ENCODE measurements at regions of chr5 and their contacts with region 1.

Region 1: GRCh38 chr5:36934740-36935356 is 58.3 kb downstream of the NIPBL start:
- DNase-seq: peak in 1 of 3 donors; percentile 11
- H3K4me3 ChIP-seq: no peak overlapping the region
- H3K4me3 Mint-ChIP-seq: no peak overlapping the region
- H3K27ac ChIP-seq: no peak overlapping the region
- H3K27ac Mint-ChIP-seq: no peak overlapping the region
- H3K4me1 ChIP-seq: peaks cover 0 to 10% of the 10 kb centered on the region in 2 donors
- H3K4me1 Mint-ChIP-seq: peaks cover 45% of the 10 kb centered on the region
- H3K27me3 ChIP-seq: no peaks in the 10 kb centered on the region
- H3K27me3 Mint-ChIP-seq: no peaks in the 10 kb centered on the region
- CTCF ChIP-seq: no peak

Region 2: GRCh38 chr5:36882250-36882649 is 52.6 kb before region 1 on chr5:
- intact Hi-C with region 1: loop called (anchors 5 to 10 kb)
- DNase-seq: peak in 1 of 3 donors; percentile 21
- H3K4me3 ChIP-seq: no peak overlapping the region
- H3K4me3 Mint-ChIP-seq: no peak overlapping the region
- H3K27ac ChIP-seq: peak overlapping the region in 1 of 2 donors; percentile 1
- H3K27ac Mint-ChIP-seq: peak overlapping the region in 1 of 7 donors; percentile 81
- H3K4me1 ChIP-seq: peaks cover 19 to 63% of the 10 kb centered on the region in 2 donors
- H3K4me1 Mint-ChIP-seq: peaks cover 60% of the 10 kb centered on the region
- H3K27me3 ChIP-seq: no peaks in the 10 kb centered on the region
- H3K27me3 Mint-ChIP-seq: no peaks in the 10 kb centered on the region
- CTCF ChIP-seq: no peak

Region 3: DNA sequence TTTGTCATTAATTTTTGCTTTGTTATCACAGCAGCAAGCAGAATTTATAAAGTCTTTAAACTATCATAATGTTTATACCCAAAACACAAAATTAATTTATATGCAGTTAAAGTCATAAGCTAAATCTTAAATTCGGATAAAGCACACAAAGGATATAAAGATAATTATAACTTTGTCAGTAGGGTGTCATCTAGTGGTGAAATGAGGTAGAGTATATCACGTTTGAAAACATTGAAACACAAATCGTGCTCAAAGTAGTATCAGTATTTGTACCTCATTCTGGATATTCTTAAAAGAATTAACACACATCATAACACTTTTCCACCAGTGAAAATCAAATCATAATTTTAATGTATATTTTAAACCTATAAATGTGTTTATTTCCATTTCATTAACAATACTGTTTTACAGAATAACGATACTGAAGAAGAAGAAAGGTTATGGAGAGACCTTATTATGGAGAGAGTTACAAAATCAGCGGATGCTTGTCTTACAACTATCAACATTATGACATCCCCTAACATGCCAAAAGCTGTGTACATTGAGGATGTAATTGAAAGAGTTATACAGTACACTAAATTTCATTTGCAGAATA is 71.2 kb after region 1 on chr5:
- intact Hi-C with region 1: no loop called
- DNase-seq: no peak
- H3K4me3 ChIP-seq: no peak overlapping the region
- H3K4me3 Mint-ChIP-seq: no peak overlapping the region
- H3K27ac ChIP-seq: no peak overlapping the region
- H3K27ac Mint-ChIP-seq: no peak overlapping the region
- H3K4me1 ChIP-seq: no peaks in the 10 kb centered on the region
- H3K4me1 Mint-ChIP-seq: no peaks in the 10 kb centered on the region
- H3K27me3 ChIP-seq: no peaks in the 10 kb centered on the region
- H3K27me3 Mint-ChIP-seq: no peaks in the 10 kb centered on the region
- CTCF ChIP-seq: peak; percentile 35